Activated naive CD4-positive, alpha-beta T cell treated with anti-CD3 and anti-CD28 coated beads for 36 hours (primary cell): ENCODE measurements at regions of chr17 and their contacts with region 1.

Region 1: GRCh38 chr17:81512560-81513371 is at the start of gene ACTG1:
- DNase-seq: peak; percentile 90
- H3K4me3 Mint-ChIP-seq: peak within 1 kb of the TSS; percentile 96
- H3K27ac Mint-ChIP-seq: peak within 1 kb of the TSS; percentile 93
- H3K4me1 Mint-ChIP-seq: peaks cover 32% of the 10 kb centered on the region
- H3K27me3 Mint-ChIP-seq: no peaks in the 10 kb centered on the region
- total RNA-seq, gene ACTG1: 2,881 to 2,925 TPM

Region 2: GRCh38 chr17:81294856-81295680 is 217.7 kb before region 1 on chr17 and contains the start of gene SLC38A10:
- CTCF ChIA-PET with region 1: no interaction called
- intact Hi-C with region 1: loop called (anchors 10 kb)
- DNase-seq: peak; percentile 95
- H3K4me3 Mint-ChIP-seq: peak within 1 kb of the TSS; percentile 92
- H3K27ac Mint-ChIP-seq: peak within 1 kb of the TSS; percentile 91
- H3K4me1 Mint-ChIP-seq: peaks cover 36% of the 10 kb centered on the region
- H3K27me3 Mint-ChIP-seq: no peaks in the 10 kb centered on the region
- total RNA-seq, gene SLC38A10: 29.1 to 31.9 TPM

Region 3: DNA sequence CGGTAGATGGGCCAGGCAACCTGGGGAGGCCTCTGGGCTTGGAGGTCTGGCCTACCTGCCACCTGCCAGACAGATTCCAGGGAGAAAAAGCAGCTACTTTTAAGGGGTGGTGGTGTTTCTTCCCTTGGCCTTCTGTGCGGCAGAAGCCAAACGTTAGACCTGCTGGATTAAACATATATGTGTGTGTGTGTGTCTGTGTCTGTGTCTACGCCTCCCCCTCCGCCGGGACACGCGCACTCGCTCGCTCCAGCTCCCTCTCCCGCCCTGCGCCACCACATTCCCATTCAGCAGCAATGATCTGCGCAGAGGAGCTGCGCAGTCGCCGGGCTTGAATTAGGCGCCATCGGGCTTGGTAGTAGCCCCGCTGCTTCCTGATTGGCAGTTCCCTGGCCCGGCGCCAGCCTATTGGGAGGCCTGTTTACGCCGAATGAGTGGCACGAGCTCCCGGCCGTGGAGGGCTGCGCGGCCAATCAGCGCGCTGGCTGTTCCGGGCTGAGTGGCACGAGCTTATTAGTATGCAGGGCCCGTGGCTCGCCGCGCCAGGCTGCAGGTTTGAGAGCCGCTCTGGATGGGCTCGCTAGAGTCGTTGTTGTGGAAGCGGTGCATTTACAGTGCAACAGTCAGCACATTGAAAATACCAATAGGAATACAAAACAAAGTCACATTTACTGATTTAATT is 117.7 kb before region 1 on chr17 and contains the start of gene BAHCC1:
- CTCF ChIA-PET with region 1: no interaction called
- intact Hi-C with region 1: loop called (anchors 1 kb)
- DNase-seq: peak; percentile 95
- H3K4me3 Mint-ChIP-seq: peak within 1 kb of the TSS; percentile 54
- H3K27ac Mint-ChIP-seq: no peak within 1 kb of the TSS
- H3K4me1 Mint-ChIP-seq: peaks cover 29% of the 10 kb centered on the region
- H3K27me3 Mint-ChIP-seq: peaks cover 53% of the 10 kb centered on the region
- total RNA-seq, gene BAHCC1: 0.02 TPM in 1 of 2 experiments, not detected in the other

Region 4: GRCh38 chr17:81553018-81553615 is 40.4 kb after region 1 on chr17:
- CTCF ChIA-PET with region 1: no interaction called
- intact Hi-C with region 1: loop called (anchors 1 kb)
- DNase-seq: peak; percentile 84
- H3K4me3 Mint-ChIP-seq: peak overlapping the region; percentile 83
- H3K27ac Mint-ChIP-seq: peak overlapping the region; percentile 82
- H3K4me1 Mint-ChIP-seq: peaks cover 38% of the 10 kb centered on the region
- H3K27me3 Mint-ChIP-seq: no peaks in the 10 kb centered on the region

Region 5: DNA sequence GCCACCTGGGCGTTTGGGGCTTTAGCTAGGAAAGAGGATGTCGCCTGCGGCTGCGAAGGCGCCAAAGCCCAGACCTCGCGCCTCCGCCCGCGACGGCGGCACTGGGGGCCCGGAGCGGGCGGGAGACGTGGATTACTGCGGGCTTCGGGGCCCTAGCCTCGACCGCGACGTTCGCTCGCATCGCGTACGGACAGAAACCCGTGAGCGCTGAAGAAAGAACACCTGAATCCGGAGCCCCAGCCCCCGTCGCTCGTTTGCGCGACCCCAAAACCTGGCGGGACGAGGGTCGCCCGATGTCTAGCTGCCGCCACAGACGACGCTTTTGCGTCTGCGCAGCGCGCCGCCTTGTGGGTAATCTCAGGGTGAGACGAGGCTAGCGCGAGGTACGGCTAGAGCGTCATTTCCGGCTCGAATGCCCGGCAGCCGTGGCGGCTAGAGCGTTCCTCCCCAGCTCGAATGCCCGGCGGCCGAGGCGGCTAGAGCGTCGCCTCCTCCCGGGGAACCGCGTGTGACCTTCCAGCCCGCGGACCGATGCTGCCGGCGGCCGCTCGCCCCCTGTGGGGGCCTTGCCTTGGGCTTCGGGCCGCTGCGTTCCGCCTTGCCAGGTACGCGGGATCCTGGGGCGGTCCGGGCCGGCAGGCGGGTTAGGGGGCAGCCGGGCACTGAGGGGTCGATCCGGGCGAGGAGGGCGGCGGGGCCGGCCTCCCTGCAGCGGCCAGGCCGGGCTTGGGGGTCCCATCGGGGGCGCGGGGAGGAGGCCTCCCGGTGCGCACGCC is 190.4 kb after region 1 on chr17 and contains the start of gene MRPL12:
- CTCF ChIA-PET with region 1: no interaction called
- intact Hi-C with region 1: loop called (anchors 1 kb)
- DNase-seq: peak; percentile 91
- H3K4me3 Mint-ChIP-seq: peak within 1 kb of the TSS; percentile 95
- H3K27ac Mint-ChIP-seq: peak within 1 kb of the TSS; percentile 88
- H3K4me1 Mint-ChIP-seq: peaks cover 38% of the 10 kb centered on the region
- H3K27me3 Mint-ChIP-seq: no peaks in the 10 kb centered on the region
- total RNA-seq, gene MRPL12: 97.7 to 102 TPM

Region 6: DNA sequence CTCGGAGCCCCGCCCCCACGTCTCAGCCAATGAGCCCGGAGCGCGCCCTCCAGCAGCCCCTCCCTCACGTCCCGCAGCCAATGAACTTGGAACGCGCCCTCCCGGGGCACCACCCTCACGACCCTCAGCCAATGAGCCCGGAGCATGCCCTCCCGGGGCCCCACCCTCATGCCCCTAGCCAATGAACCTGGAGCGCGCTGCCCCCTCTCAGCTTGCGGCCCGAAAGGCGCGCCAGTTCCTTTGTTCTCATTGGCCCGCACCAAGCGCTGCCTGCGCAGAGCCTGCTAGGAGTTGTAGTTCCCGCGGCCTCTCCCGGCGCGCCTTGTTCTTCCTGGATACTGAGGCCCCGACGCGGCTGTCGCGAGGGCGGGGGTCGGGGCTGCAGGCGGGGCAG is 510.2 kb after region 1 on chr17 and contains the start of gene LRRC45:
- CTCF ChIA-PET with region 1: no interaction called
- intact Hi-C with region 1: loop called (anchors 10 kb)
- DNase-seq: peak; percentile 100
- H3K4me3 Mint-ChIP-seq: peak within 1 kb of the TSS; percentile 86
- H3K27ac Mint-ChIP-seq: no peak within 1 kb of the TSS
- H3K4me1 Mint-ChIP-seq: peaks cover 22% of the 10 kb centered on the region
- H3K27me3 Mint-ChIP-seq: no peaks in the 10 kb centered on the region
- total RNA-seq, gene LRRC45: 12.0 to 12.5 TPM